ENCODE measurements at regions of chr13 and their contacts with region 1.

Region 1: DNA sequence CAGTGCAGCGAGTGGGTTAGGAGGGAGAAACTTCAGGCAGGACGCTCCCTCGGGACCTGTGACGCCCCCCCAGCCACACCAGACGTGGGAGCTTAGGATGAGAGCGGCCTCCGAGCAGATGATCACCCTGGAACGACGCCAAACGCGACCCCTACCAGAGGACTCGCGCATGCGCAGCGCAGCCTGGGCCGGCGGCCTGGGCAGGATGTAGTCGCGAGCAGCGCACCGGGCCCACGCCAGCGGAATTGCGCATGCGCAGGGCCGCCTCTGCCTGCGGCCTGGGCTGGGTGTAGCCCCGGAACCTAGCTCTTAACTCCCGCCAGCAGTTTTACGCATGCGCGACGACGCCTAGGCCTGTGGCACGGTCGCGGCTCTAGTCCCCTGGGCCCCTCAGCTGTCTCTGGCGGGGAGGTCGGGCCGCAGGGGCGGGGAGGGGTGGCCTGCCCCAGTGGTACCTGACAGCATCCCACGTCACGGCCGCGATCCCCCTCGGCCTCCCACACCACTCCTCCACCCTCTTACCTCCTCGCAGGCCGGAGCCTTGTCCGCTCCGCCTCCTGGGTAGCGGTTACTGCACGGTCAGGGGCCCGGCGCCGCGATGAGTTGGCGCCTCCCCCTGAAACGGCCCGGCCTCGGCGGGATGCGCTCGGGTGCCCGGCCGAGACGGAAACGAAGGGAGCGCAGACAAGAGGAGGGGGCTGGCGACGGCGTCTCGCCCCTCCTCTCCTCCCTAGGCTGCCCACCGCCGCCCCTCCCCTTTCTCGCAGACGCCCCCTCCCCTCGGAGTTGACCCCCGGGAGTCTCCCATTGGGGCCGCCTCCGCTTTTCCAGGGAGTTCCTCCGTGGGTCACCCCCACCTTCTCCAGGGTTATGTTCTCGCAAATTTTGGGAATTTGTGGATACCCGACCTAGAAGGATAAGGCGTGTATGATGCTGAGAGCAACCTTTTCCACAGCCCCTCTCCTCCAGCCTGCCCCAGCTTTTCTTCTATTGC is at the start of gene RCBTB2:
- DNase-seq: peak; percentile 95 to 100 (median 98)
- ATAC-seq: peak; percentile 88 to 91
- H3K4me3 Mint-ChIP-seq: peak within 1 kb of the TSS; percentile 89 to 99 (median 95)
- H3K27ac Mint-ChIP-seq: peak within 1 kb of the TSS; percentile 98 to 100 (median 99)
- H3K4me1 Mint-ChIP-seq: peaks cover 5 to 34% (median 22%) of the 10 kb centered on the region in 4 donors
- H3K27me3 Mint-ChIP-seq: peaks cover 0 to 3% (median 0%) of the 10 kb centered on the region in 5 donors
- polyA plus RNA-seq, gene RCBTB2: 6.3 to 17.6 (median 6.3) TPM

Region 2: GRCh38 chr13:48492470-48493065 is 40.2 kb before region 1 on chr13:
- POLR2A ChIA-PET with region 1: interaction called, 35 read pairs
- DNase-seq: peak; percentile 26 to 85 (median 67)
- ATAC-seq: peak; percentile 90 to 93
- H3K4me3 Mint-ChIP-seq: no peak overlapping the region
- H3K27ac Mint-ChIP-seq: no peak overlapping the region
- H3K4me1 Mint-ChIP-seq: peaks cover 15 to 31% (median 20%) of the 10 kb centered on the region in 4 donors
- H3K27me3 Mint-ChIP-seq: no peaks in the 10 kb centered on the region

Region 3: DNA sequence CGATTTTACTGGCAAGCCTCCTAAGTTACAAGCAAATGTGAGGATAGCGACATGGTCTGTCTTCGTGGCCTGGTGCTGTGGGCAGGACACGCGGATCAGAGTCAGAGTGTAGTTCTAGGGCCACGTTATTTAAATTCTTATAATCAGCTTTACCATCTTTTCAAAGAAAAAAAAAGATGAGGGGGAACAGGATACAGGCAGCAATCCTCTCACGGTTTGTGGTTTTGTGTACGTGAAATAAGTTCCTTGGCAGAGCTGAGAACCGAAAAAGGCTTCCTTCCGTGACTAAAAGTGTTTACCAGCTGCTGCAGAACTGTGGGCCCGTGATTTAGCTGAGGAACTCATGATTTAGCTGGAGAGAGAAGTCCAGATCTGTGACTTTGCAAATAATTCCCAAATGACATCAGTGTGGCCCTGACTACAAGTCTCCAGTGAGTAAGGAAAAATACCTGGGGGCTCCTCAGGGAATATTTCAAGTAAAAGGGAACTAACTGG is 27.2 kb before region 1 on chr13:
- POLR2A ChIA-PET with region 1: interaction called, 69 read pairs
- DNase-seq: peak in 9 of 10 donors; percentile 30 to 86 (median 66)
- ATAC-seq: peak; percentile 96 to 97
- H3K4me3 Mint-ChIP-seq: peak overlapping the region; percentile 34 to 88 (median 78)
- H3K27ac Mint-ChIP-seq: peak overlapping the region; percentile 81 to 97 (median 93)
- H3K4me1 Mint-ChIP-seq: peaks cover 27 to 67% (median 38%) of the 10 kb centered on the region in 4 donors
- H3K27me3 Mint-ChIP-seq: no peaks in the 10 kb centered on the region

Region 4: GRCh38 chr13:48562296-48563066 is 29.7 kb after region 1 on chr13:
- POLR2A ChIA-PET with region 1: interaction called, 33 read pairs
- DNase-seq: peak in 9 of 10 donors; percentile 53 to 87 (median 78)
- ATAC-seq: peak; percentile 100
- H3K4me3 Mint-ChIP-seq: peak overlapping the region in 8 of 10 donors; percentile 16 to 55 (median 43)
- H3K27ac Mint-ChIP-seq: peak overlapping the region in 3 of 10 donors; percentile 23 to 64 (median 35)
- H3K4me1 Mint-ChIP-seq: peaks cover 12 to 51% (median 25%) of the 10 kb centered on the region in 4 donors
- H3K27me3 Mint-ChIP-seq: peaks cover 33 to 72% (median 46%) of the 10 kb centered on the region in 5 donors

Region 5: GRCh38 chr13:48580185-48580803 is 47.5 kb after region 1 on chr13:
- POLR2A ChIA-PET with region 1: interaction called, 13 read pairs
- DNase-seq: peak; percentile 49 to 85 (median 69)
- ATAC-seq: peak; percentile 51 to 65
- H3K4me3 Mint-ChIP-seq: no peak overlapping the region
- H3K27ac Mint-ChIP-seq: peak overlapping the region in 1 of 10 donors; percentile 16
- H3K4me1 Mint-ChIP-seq: peaks cover 0 to 31% (median 0%) of the 10 kb centered on the region in 4 donors
- H3K27me3 Mint-ChIP-seq: peaks cover 15 to 44% (median 20%) of the 10 kb centered on the region in 5 donors

Region 6: DNA sequence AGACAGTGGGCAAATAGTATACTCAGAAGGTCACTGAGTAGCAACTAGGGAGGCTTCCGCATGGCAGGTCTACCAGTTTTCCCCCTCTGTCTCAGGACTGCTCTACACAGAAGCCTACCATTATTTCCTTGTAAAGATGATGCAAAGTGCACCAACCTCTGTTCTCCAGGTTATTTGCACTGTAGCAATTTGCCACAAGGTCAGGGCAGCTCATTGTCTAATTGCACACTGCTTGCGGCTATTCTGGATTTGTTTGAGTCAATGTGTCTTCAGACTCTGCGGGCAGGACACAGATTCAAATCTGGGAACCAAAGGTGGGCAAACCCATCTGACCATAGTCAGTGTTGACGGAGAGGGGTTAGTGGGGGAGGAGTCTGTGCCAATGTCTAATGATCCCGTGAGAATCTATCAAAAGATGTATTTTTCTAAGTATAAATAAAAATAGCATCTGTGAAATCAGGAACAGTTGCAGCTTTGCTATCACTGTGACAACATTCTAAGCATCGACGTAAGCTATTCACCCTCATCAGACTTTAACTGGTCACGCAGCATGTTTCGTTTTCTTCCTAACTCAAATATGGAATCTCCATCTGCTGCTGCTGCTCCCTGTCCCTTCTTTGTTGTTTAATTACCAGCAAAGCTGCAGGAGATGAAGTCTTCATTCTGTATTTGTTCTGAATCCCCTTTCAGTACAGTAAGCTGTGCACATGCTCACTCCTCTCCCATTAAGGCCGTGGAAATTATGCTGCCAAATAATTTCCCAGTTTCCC is 147.3 kb after region 1 on chr13:
- POLR2A ChIA-PET with region 1: no interaction called
- DNase-seq: no peak
- ATAC-seq: no peak
- H3K4me3 Mint-ChIP-seq: no peak overlapping the region
- H3K27ac Mint-ChIP-seq: no peak overlapping the region
- H3K4me1 Mint-ChIP-seq: peaks cover 20 to 30% (median 24%) of the 10 kb centered on the region in 4 donors
- H3K27me3 Mint-ChIP-seq: no peaks in the 10 kb centered on the region